ENCODE measurements at regions of chr9 and their contacts with region 1.

Region 1: GRCh38 chr9:115615821-115616665 is 498.1 kb upstream of the TNC start:
- DNase-seq: peak; percentile 96
- ATAC-seq: peak; percentile 96
- H3K4me3 ChIP-seq: no peak overlapping the region
- H3K27ac ChIP-seq: peak overlapping the region; percentile 97
- H3K4me1 ChIP-seq: peaks cover 20% of the 10 kb centered on the region
- H3K27me3 ChIP-seq: no peaks in the 10 kb centered on the region
- CTCF ChIP-seq: no peak
- POLR2A ChIP-seq: no peak
- RAD21 ChIP-seq: no peak

Region 2: GRCh38 chr9:115604831-115605483 is 11.1 kb before region 1 on chr9:
- CTCF ChIA-PET with region 1: no interaction called
- POLR2A ChIA-PET with region 1: no interaction called
- dilution Hi-C with region 1: no loop called
- in situ Hi-C with region 1: no loop called
- intact Hi-C with region 1: no loop called
- DNase-seq: peak; percentile 98
- ATAC-seq: peak; percentile 80
- H3K4me3 ChIP-seq: no peak overlapping the region
- H3K27ac ChIP-seq: peak overlapping the region; percentile 41
- H3K4me1 ChIP-seq: peaks cover 4% of the 10 kb centered on the region; the same call in 1 of the 2 replicates
- H3K27me3 ChIP-seq: no peaks in the 10 kb centered on the region
- CTCF ChIP-seq: no peak
- POLR2A ChIP-seq: no peak
- RAD21 ChIP-seq: peak; percentile 13; the same call in 1 of the 2 replicates

Region 3: DNA sequence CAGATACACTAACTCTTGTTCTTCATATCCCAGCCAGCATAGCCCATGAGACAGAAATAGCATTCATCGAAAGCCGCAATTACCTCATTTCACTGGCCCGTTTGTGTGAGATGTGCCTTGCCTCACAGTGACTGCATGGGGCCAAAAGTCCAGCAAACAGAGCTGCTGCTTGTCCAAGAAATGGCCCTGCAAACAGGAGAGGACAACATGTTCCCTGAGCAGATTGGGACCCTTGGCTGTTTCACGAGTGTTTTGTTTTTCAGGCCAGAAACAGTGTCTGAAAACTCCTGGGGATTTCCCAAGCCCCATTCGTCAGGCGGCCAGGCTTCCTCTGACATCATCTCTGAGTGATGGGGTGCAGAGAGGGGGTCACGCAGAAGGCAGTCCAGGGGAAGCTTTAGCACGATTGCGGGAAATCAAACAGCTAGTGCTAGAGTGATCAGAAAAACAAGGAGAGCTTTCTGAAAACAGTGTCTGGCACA is 34.0 kb after region 1 on chr9:
- CTCF ChIA-PET with region 1: no interaction called
- POLR2A ChIA-PET with region 1: no interaction called
- dilution Hi-C with region 1: no loop called
- in situ Hi-C with region 1: no loop called
- intact Hi-C with region 1: loop called (anchors 5 kb)
- DNase-seq: peak; percentile 99
- ATAC-seq: peak; percentile 75
- H3K4me3 ChIP-seq: no peak overlapping the region
- H3K27ac ChIP-seq: peak overlapping the region; percentile 86
- H3K4me1 ChIP-seq: peaks cover 12% of the 10 kb centered on the region
- H3K27me3 ChIP-seq: no peaks in the 10 kb centered on the region
- CTCF ChIP-seq: no peak
- POLR2A ChIP-seq: peak; percentile 44
- RAD21 ChIP-seq: peak; percentile 35; the same call in 1 of the 2 replicates